ENCODE measurements at regions of chr11 and their contacts with region 1.

Region 1: DNA sequence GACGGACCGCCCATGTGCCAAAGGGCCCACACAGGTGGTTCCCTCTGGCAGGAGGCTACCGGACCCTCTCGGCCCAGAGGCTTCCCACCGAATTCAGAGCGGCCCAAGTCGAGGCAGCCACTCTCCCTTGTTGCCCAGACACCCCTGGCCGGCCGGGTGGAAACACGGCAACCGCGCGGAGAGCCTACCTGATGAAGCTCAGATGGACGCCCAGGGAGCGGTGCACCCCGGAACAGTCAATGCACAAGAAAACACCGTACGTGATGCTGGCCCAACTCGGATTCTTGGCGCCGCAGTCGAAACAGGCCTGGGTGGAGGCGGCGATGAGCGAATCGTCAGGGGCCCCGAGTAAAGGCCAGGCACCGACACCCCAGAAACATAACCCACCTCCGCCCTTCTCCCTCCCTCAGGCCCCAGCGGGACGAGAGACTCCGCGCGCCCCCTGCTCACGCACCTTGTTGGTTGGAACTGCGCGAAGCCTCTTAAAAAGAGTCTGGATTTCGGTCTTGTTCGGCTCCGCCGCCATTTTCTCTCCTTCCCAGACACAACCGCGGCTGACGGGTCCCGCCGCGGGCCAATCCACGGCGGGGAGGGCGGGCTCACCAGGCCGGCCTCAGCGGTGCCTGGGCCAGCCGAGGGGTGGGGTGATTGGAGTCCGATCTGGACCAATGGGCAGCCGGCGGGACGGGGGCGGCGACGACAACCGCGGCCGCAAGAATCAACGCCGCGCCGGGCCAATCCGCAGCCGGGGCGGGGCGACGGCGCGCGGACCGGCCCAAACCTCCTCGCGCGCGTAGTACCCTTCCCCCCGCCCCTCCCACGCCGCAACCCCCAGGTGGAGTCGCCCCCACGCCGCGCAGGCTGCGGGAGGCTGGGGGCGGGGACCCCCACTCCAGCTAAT is at the start of gene ARFGAP2:
- DNase-seq: peak; percentile 89 to 99 (median 95)
- ATAC-seq: peak; percentile 88
- H3K4me3 ChIP-seq: peak within 1 kb of the TSS; percentile 100
- H3K4me3 Mint-ChIP-seq: peak within 1 kb of the TSS; percentile 99
- H3K27ac ChIP-seq: peak within 1 kb of the TSS; percentile 90 to 96
- H3K27ac Mint-ChIP-seq: peak within 1 kb of the TSS; percentile 97
- H3K4me1 ChIP-seq: peaks cover 56% of the 10 kb centered on the region
- H3K4me1 Mint-ChIP-seq: peaks cover 54% of the 10 kb centered on the region
- H3K27me3 ChIP-seq: no peaks in the 10 kb centered on the region
- H3K27me3 Mint-ChIP-seq: peaks cover 5% of the 10 kb centered on the region
- CTCF ChIP-seq: no peak
- total RNA-seq, gene ARFGAP2: 161 to 174 TPM

Region 2: DNA sequence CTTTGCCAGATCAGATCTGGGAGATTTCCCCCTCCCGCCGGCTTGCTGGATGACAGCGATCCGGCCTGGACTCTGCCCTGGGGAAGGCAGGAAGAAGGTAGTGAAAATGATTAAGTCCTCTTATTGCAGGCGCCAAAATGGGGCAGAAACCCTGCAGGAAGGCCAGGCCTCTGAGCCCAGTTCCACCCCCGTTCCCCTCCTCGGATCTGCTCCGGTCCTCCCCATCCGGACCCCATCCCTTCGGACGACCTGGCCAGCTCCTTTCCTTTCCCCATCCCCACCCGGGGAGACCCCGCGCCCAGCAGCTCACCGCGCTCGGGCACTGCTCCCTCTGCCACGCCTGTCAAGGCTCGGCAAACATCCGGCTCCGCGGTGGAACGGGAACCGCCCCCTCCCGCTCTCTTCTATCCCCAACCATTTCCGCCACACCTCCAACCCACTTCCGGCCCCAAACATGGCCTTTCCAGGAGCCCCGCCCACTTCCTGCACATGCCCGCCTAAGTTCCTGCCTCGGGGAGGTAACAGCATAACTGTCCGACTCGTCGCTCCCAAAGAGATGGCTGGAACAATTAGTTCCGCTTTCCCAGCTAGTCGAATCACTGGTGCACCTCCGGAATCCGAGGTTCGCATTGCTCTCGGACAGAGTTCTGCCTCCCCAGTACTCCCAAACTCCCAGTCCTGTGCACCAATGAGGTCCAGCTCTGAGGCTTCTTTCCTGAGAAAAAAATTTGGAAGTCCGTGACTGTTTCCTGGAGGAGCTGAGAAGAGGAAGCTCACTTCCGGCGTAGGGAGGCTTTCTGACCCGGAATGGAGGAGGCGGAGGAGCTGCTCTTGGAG is 476.1 kb before region 1 on chr11 and contains the starts of genes ARHGAP1 and ZNF408:
- CTCF ChIA-PET with region 1: no interaction called
- POLR2A ChIA-PET with region 1: no interaction called
- intact Hi-C with region 1: loop called in 1 of 2 experiments (anchors 10 kb)
- DNase-seq: peak; percentile 98 to 100 (median 99)
- ATAC-seq: peak; percentile 93
- H3K4me3 ChIP-seq: peak within 1 kb of the TSS; percentile 84
- H3K4me3 Mint-ChIP-seq: peak within 1 kb of the TSS; percentile 96
- H3K27ac ChIP-seq: peak within 1 kb of the TSS; percentile 72 to 78
- H3K27ac Mint-ChIP-seq: peak within 1 kb of the TSS; percentile 87
- H3K4me1 ChIP-seq: peaks cover 62% of the 10 kb centered on the region
- H3K4me1 Mint-ChIP-seq: peaks cover 62% of the 10 kb centered on the region
- H3K27me3 ChIP-seq: no peaks in the 10 kb centered on the region
- H3K27me3 Mint-ChIP-seq: no peaks in the 10 kb centered on the region
- CTCF ChIP-seq: no peak
- total RNA-seq, gene ARHGAP1: 33.7 to 36.3 TPM
- total RNA-seq, gene ZNF408: 22.7 to 23.0 TPM

Region 3: GRCh38 chr11:46972343-46972742 is 204.2 kb before region 1 on chr11:
- CTCF ChIA-PET with region 1: no interaction called
- POLR2A ChIA-PET with region 1: no interaction called
- intact Hi-C with region 1: no loop called
- DNase-seq: no peak
- ATAC-seq: no peak
- H3K4me3 ChIP-seq: no peak overlapping the region
- H3K4me3 Mint-ChIP-seq: no peak overlapping the region
- H3K27ac ChIP-seq: no peak overlapping the region
- H3K27ac Mint-ChIP-seq: no peak overlapping the region
- H3K4me1 ChIP-seq: no peaks in the 10 kb centered on the region
- H3K4me1 Mint-ChIP-seq: no peaks in the 10 kb centered on the region
- H3K27me3 ChIP-seq: no peaks in the 10 kb centered on the region
- H3K27me3 Mint-ChIP-seq: no peaks in the 10 kb centered on the region
- CTCF ChIP-seq: no peak

Region 4: DNA sequence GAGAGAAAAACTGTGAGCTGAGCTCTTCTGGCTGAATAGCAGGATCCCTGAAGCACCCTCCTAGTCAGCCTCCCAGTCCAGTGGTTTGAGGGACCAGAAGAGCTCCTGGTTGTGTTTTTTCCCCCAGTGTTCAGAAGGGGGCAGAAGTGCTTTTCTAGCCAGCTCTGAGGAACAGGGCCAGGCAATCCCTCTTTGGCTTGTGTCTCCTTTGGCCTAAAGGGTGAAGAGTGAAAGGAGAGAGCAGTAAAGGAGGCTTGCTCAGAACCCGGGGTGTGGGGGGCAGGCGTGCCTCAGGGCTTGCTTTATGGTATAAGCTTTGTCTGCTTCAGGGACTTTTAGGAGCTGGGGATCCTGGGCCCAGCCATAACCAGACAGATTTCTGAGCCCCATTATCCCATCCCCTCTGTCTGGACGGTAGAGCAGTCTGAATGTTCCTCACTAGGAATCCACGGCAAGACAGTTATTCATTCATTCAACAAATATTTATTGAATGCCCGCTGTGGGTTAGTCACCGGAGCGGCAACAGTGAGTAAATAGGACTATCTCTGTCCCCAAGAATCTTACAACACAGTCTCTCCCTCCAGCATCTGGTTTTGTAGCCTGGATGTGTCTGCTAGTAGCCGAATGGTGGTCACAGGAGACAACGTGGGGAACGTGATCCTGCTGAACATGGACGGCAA is 57.6 kb after region 1 on chr11:
- CTCF ChIA-PET with region 1: interaction called, 10 read pairs
- POLR2A ChIA-PET with region 1: interaction called, 3 read pairs
- intact Hi-C with region 1: no loop called
- DNase-seq: peak in 8 of 14 experiments; percentile 9 to 69 (median 22)
- ATAC-seq: no peak
- H3K4me3 ChIP-seq: peak overlapping the region; percentile 10
- H3K4me3 Mint-ChIP-seq: peak overlapping the region; percentile 80
- H3K27ac ChIP-seq: peak overlapping the region; percentile 65 to 72
- H3K27ac Mint-ChIP-seq: peak overlapping the region; percentile 94
- H3K4me1 ChIP-seq: peaks cover 24% of the 10 kb centered on the region
- H3K4me1 Mint-ChIP-seq: peaks cover 29% of the 10 kb centered on the region
- H3K27me3 ChIP-seq: no peaks in the 10 kb centered on the region
- H3K27me3 Mint-ChIP-seq: no peaks in the 10 kb centered on the region
- CTCF ChIP-seq: peak; percentile 11

Region 5: GRCh38 chr11:47269002-47269828 is 92.6 kb after region 1 on chr11:
- CTCF ChIA-PET with region 1: no interaction called
- POLR2A ChIA-PET with region 1: interaction called, 6 read pairs
- intact Hi-C with region 1: loop called (anchors 1 kb)
- DNase-seq: peak; percentile 74 to 93 (median 84)
- ATAC-seq: peak; percentile 62
- H3K4me3 ChIP-seq: peak overlapping the region; percentile 71
- H3K4me3 Mint-ChIP-seq: peak overlapping the region; percentile 94
- H3K27ac ChIP-seq: peak overlapping the region; percentile 91 to 94
- H3K27ac Mint-ChIP-seq: peak overlapping the region; percentile 99
- H3K4me1 ChIP-seq: peaks cover 58% of the 10 kb centered on the region
- H3K4me1 Mint-ChIP-seq: peaks cover 57% of the 10 kb centered on the region
- H3K27me3 ChIP-seq: no peaks in the 10 kb centered on the region
- H3K27me3 Mint-ChIP-seq: no peaks in the 10 kb centered on the region
- CTCF ChIP-seq: peak; percentile 22

Region 6: GRCh38 chr11:47552566-47553416 is 376.2 kb after region 1 on chr11 and contains the start of gene CELF1:
- CTCF ChIA-PET with region 1: interaction called, 4 read pairs
- POLR2A ChIA-PET with region 1: no interaction called
- intact Hi-C with region 1: loop called in 1 of 2 experiments (anchors 10 kb)
- DNase-seq: peak; percentile 85 to 97 (median 91)
- ATAC-seq: peak; percentile 93
- H3K4me3 ChIP-seq: peak within 1 kb of the TSS; percentile 99
- H3K4me3 Mint-ChIP-seq: peak within 1 kb of the TSS; percentile 98
- H3K27ac ChIP-seq: peak within 1 kb of the TSS; percentile 78 to 88
- H3K27ac Mint-ChIP-seq: peak within 1 kb of the TSS; percentile 98
- H3K4me1 ChIP-seq: peaks cover 42% of the 10 kb centered on the region
- H3K4me1 Mint-ChIP-seq: peaks cover 54% of the 10 kb centered on the region
- H3K27me3 ChIP-seq: no peaks in the 10 kb centered on the region
- H3K27me3 Mint-ChIP-seq: no peaks in the 10 kb centered on the region
- CTCF ChIP-seq: peak; percentile 81
- total RNA-seq, gene CELF1: 103 to 111 TPM

Region 7: DNA sequence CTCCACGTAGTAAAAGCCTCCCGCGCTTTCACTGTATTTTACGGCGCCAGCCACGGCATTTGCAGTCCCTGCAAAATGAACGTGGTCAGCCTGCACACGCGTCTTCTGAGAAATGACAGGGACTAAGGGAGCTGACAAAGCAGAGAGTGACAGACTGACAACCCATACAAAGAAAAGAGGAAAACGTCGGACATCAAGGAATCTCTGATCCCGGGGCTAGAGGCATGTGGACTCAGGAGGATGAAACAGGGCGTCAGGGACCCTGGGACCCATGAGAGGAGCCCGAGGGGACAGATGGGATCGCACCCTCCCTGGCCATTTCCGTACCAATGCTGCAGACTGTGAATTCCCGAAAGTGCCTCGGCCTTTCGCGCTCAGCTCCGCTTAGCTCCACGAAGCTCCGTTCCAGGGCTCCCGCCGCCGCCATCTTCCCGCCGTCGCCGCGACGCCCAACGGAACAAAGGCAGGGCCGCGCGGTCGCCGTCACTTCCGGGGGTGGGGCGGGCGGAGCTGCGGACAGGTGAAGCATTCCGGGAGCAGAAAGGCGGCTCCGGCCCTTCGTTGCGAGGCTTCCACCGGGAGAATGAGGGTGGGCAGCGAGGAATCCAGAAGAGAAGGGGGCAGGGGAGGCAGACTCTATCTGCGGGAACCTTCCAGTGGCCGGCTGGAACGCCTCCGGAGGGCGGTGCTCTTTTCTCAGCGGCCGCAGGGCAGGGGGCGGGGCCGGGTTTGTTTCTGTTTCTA is 671.5 kb after region 1 on chr11 and contains the start of gene NUP160:
- CTCF ChIA-PET with region 1: no interaction called
- POLR2A ChIA-PET with region 1: no interaction called
- intact Hi-C with region 1: loop called in 1 of 2 experiments (anchors 5 kb)
- DNase-seq: peak; percentile 74 to 93 (median 86)
- ATAC-seq: peak; percentile 86
- H3K4me3 ChIP-seq: peak within 1 kb of the TSS; percentile 75
- H3K4me3 Mint-ChIP-seq: peak within 1 kb of the TSS; percentile 100
- H3K27ac ChIP-seq: peak within 1 kb of the TSS; percentile 82 to 94
- H3K27ac Mint-ChIP-seq: peak within 1 kb of the TSS; percentile 98
- H3K4me1 ChIP-seq: peaks cover 46% of the 10 kb centered on the region
- H3K4me1 Mint-ChIP-seq: peaks cover 66% of the 10 kb centered on the region
- H3K27me3 ChIP-seq: no peaks in the 10 kb centered on the region
- H3K27me3 Mint-ChIP-seq: no peaks in the 10 kb centered on the region
- CTCF ChIP-seq: peak; percentile 15
- total RNA-seq, gene NUP160: 41.9 to 47.9 TPM